Mammary epithelial cell (primary cell): ENCODE measurements at regions of chr10 and their contacts with region 1.

Region 1: GRCh38 chr10:123380497-123381085 is 226.4 kb downstream of the BUB3 start:
- DNase-seq: peak; percentile 32
- H3K4me3 ChIP-seq: no peak overlapping the region
- H3K27ac ChIP-seq: no peak overlapping the region
- H3K4me1 ChIP-seq: peaks cover 12% of the 10 kb centered on the region
- H3K27me3 ChIP-seq: no peaks in the 10 kb centered on the region
- CTCF ChIP-seq: peak; percentile 19 to 58

Region 2: DNA sequence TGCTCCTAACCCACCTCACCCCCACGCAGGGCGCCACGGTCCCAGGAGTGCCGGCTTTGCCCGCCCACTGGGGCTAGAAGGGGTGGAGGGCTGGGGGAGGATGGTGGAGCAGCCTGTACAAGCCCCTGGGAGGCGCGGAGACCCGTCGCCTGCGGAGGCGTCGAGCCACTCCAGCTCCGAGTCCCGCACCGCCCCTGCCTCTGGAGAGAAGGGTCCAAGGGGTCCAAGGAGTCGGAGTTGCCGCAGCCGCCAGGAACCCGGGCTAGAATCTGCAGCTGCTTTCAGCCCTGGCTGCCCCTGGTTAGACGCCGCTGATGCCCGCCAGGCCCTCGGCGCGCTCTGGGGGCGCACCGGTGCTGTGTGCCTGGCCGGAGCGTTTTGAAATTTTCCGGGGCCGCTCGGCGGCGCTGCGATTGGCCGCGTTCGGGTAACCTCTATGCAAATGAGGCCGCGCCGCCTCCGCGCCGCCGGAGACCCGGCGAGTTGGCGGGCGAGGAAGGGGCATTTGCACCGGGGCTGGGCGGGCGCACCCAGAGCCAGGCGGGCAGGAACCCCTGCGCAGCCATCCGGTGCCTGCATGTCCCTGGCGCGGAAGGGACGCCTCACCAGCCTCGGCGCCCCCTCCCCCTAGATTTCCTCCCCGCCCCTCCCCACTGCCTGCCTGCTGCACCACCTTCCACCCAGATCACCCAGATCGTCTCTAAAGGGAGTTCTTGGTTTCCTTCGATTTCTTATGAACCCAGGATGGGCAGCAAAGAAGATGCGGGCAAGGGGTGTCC is 232.8 kb before region 1 on chr10 and contains the start of gene HMX2:
- CTCF ChIA-PET with region 1: no interaction called
- dilution Hi-C with region 1: no loop called
- in situ Hi-C with region 1: loop called in 1 of 2 experiments (anchors 10 kb)
- intact Hi-C with region 1: no loop called
- DNase-seq: peak; percentile 9
- H3K4me3 ChIP-seq: peak within 1 kb of the TSS in 1 of 3 experiments; percentile 1
- H3K27ac ChIP-seq: no peak within 1 kb of the TSS
- H3K4me1 ChIP-seq: peaks cover 33% of the 10 kb centered on the region
- H3K27me3 ChIP-seq: peaks cover 72% of the 10 kb centered on the region
- CTCF ChIP-seq: no peak
- total RNA-seq, gene HMX2: not detected

Region 3: GRCh38 chr10:123309731-123310130 is 70.9 kb before region 1 on chr10:
- CTCF ChIA-PET with region 1: no interaction called
- dilution Hi-C with region 1: no loop called
- in situ Hi-C with region 1: no loop called
- intact Hi-C with region 1: no loop called
- DNase-seq: no peak
- H3K4me3 ChIP-seq: no peak overlapping the region
- H3K27ac ChIP-seq: no peak overlapping the region
- H3K4me1 ChIP-seq: no peaks in the 10 kb centered on the region
- H3K27me3 ChIP-seq: peaks cover 2% of the 10 kb centered on the region
- CTCF ChIP-seq: no peak

Region 4: DNA sequence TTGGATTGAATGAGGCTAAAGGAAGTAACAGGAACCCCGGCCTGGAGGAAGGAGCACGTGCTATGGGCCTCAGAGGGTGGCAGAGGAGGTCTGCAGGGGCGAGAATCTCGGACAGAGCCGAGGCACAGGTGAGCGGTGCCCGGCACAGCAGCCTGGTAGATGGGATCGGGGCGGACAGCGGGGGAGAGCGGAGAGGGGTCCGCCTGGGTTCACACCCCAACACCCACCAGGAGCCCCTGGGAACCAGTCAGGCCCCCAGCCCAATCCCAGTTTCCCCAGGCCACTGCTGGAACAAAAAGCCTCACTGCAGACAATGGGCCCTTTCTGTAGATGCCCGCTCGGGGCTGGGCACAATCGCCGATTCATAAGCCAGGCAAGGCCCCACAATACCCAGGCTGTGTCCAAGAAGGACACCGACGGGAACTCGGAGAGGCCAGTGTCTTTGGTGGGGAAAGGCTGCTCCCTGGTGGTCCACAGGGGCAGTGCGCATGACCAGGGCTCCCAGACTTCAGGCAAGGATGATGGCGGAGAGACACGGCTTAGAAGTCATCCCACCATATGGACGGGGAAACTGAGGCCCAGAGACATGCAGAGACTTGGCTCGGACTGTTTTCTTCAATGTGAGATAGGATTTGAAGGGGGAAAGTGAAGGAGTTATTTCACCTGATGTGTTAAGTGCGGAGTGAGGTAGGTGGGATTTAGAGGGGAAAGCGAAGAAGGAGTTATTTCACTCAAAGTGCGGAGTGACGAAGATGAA is 178.7 kb after region 1 on chr10:
- CTCF ChIA-PET with region 1: no interaction called
- dilution Hi-C with region 1: no loop called
- in situ Hi-C with region 1: no loop called
- intact Hi-C with region 1: loop called (anchors 1 kb)
- DNase-seq: peak; percentile 34
- H3K4me3 ChIP-seq: no peak overlapping the region
- H3K27ac ChIP-seq: no peak overlapping the region
- H3K4me1 ChIP-seq: no peaks in the 10 kb centered on the region
- H3K27me3 ChIP-seq: no peaks in the 10 kb centered on the region
- CTCF ChIP-seq: peak; percentile 91 to 98